ENCODE measurements at regions of chr3 and their contacts with region 1.

Region 1: DNA sequence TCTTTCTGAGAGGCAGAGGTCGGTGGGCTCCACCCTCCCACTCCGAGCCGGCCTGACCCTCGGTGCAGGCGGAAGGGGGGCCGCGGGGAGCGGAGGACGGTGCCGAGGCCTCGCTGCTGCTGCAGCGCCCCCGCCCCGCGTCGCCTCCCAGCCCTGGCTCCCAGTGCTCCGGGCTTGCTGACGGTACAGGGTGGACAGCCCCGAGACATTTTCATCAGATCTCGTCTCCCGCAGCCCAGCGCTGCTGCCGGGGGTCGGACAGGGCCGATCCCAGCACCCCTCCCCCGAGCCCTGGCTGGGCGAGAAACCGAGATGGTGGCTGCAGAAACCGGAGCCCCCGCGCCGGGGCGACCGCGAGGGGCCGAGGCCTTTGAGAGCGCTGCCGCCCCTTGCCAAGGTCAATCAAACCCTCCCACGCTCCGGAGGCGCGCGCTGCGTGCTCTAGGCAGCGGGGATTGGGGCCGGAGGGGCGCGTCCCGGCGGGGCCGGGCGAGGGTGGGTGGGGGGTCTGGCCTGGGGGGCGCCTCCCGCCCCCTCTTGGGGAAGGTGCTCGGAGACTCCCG is 42.5 kb downstream of the EPHB3 start:
- DNase-seq: peak; percentile 64 to 81 (median 75)
- H3K4me3 ChIP-seq: peak overlapping the region; percentile 41
- H3K27ac ChIP-seq: peak overlapping the region; percentile 60 to 76
- H3K4me1 ChIP-seq: peaks cover 7% of the 10 kb centered on the region
- H3K27me3 ChIP-seq: no peaks in the 10 kb centered on the region
- CTCF ChIP-seq: peak in 1 of 3 donors; percentile 5
- EP300 ChIP-seq: no peak
- POLR2A ChIP-seq: peak; percentile 10

Region 2: GRCh38 chr3:184568924-184569829 is 34.9 kb before region 1 on chr3:
- intact Hi-C with region 1: loop called in 1 of 4 experiments (anchors 5 kb)
- DNase-seq: peak; percentile 91 to 95 (median 93)
- H3K4me3 ChIP-seq: peak overlapping the region; percentile 51
- H3K27ac ChIP-seq: peak overlapping the region in 1 of 2 donors; percentile 66
- H3K4me1 ChIP-seq: peaks cover 39% of the 10 kb centered on the region
- H3K27me3 ChIP-seq: no peaks in the 10 kb centered on the region
- CTCF ChIP-seq: no peak
- EP300 ChIP-seq: no peak
- POLR2A ChIP-seq: no peak

Region 3: DNA sequence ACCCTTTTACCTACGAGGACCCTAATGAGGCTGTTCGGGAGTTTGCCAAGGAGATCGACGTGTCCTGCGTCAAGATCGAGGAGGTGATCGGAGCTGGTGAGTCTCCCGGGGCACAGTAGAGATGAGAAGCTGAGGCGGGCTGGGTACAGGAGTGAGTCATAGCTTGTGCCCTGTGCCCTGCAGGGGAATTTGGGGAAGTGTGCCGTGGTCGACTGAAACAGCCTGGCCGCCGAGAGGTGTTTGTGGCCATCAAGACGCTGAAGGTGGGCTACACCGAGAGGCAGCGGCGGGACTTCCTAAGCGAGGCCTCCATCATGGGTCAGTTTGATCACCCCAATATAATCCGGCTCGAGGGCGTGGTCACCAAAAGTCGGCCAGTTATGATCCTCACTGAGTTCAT is 24.6 kb before region 1 on chr3:
- intact Hi-C with region 1: no loop called
- DNase-seq: peak in 1 of 5 donors; percentile 38
- H3K4me3 ChIP-seq: no peak overlapping the region
- H3K27ac ChIP-seq: no peak overlapping the region
- H3K4me1 ChIP-seq: peaks cover 13% of the 10 kb centered on the region
- H3K27me3 ChIP-seq: no peaks in the 10 kb centered on the region
- CTCF ChIP-seq: no peak
- EP300 ChIP-seq: no peak
- POLR2A ChIP-seq: no peak

Region 4: GRCh38 chr3:184679056-184679816 is 75.1 kb after region 1 on chr3:
- intact Hi-C with region 1: loop called in 1 of 4 experiments (anchors 5 kb)
- DNase-seq: peak in 4 of 5 donors; percentile 56 to 75 (median 59)
- H3K4me3 ChIP-seq: no peak overlapping the region
- H3K27ac ChIP-seq: peak overlapping the region; percentile 58 to 63
- H3K4me1 ChIP-seq: peaks cover 18% of the 10 kb centered on the region
- H3K27me3 ChIP-seq: no peaks in the 10 kb centered on the region
- CTCF ChIP-seq: no peak
- EP300 ChIP-seq: no peak
- POLR2A ChIP-seq: no peak